PC-9 (cell line): ENCODE measurements at regions of chr7 and their contacts with region 1.

Region 1: GRCh38 chr7:93414628-93415027 is 159.9 kb downstream of the CALCR start:
- DNase-seq: peak in 1 of 2 experiments; percentile 83
- H3K4me3 ChIP-seq: no peak overlapping the region
- H3K27ac ChIP-seq: peak overlapping the region; percentile 46
- H3K4me1 ChIP-seq: peaks cover 14% of the 10 kb centered on the region
- H3K27me3 ChIP-seq: no peaks in the 10 kb centered on the region
- CTCF ChIP-seq: no peak

Region 2: DNA sequence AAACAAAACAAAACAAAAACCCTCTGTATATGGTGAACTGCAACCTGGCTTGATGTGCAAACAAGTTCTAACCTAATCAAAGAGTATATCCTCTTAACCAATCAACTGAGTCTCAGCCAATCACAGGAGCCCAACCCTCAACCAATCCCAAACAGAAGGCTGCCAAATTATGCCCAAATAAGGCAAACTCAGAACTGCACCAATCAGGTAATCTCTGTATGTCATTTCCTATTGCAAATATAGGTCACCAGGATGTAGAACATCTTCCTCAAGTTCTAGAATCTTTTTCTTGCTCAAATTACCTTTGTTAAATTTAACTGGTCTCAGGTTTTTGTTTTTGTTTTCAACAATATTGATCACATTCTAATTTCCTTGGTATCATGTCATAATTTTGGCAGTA is 829.6 kb before region 1 on chr7:
- CTCF ChIA-PET with region 1: no interaction called
- POLR2A ChIA-PET with region 1: interaction called, 12 read pairs
- intact Hi-C with region 1: no loop called
- DNase-seq: peak in 1 of 2 experiments; percentile 62
- H3K4me3 ChIP-seq: no peak overlapping the region
- H3K27ac ChIP-seq: no peak overlapping the region
- H3K4me1 ChIP-seq: peaks cover 27% of the 10 kb centered on the region
- H3K27me3 ChIP-seq: no peaks in the 10 kb centered on the region
- CTCF ChIP-seq: no peak

Region 3: GRCh38 chr7:93515144-93515543 is 100.5 kb after region 1 on chr7:
- CTCF ChIA-PET with region 1: no interaction called
- POLR2A ChIA-PET with region 1: no interaction called
- intact Hi-C with region 1: no loop called
- DNase-seq: no peak
- H3K4me3 ChIP-seq: no peak overlapping the region
- H3K27ac ChIP-seq: no peak overlapping the region
- H3K4me1 ChIP-seq: no peaks in the 10 kb centered on the region
- H3K27me3 ChIP-seq: no peaks in the 10 kb centered on the region
- CTCF ChIP-seq: no peak